ENCODE measurements at regions of chr2 and their contacts with region 1.

Region 1: GRCh38 chr2:68318914-68319397 is 793 bp downstream of the CNRIP1 start:
- DNase-seq: peak; percentile 78

Region 2: DNA sequence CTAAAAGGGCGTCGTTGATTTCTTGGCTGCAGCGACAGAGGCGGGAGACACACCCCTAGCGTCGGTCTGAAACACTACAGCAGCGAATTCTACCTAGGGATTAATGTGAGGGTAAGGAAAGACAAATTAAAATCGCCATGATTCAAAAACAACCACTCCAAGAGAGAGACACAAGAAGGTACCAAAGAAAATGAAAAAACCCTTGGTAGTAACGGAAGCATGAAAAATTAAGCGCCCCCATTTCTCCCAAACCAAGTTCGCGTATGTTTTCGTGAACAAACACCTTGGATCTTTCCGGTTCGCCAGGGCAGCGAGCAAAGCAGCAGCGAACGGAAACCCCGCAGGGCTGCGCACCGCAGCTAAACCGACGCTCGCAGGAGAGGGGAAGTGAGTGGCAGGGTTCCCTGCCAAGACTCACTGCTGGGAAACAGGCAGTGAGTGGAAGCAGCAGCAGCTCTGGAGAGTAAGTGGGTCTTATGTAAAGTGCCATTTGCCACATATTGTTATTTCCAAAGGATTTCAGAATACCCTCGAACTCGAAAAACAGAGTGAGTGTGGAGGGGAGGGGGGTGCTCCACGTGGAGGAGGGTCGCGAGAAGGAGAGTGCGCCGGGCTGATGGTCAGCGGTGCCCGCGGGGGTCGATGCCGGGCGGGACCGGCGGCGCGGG is 67.6 kb before region 1 on chr2:
- intact Hi-C with region 1: loop called (anchors 1 kb)
- DNase-seq: peak; percentile 82